Breast epithelium (tissue), 4 donors: ENCODE measurements at regions of chr17 and their contacts with region 1.

Region 1: GRCh38 chr17:63697341-63698286 is 2.3 kb downstream of the LIMD2 start:
- DNase-seq: no peak
- H3K4me3 ChIP-seq: peak overlapping the region in 2 of 3 donors; percentile 54 to 68
- H3K27ac ChIP-seq: peak overlapping the region; percentile 52
- H3K4me1 ChIP-seq: peaks cover 0 to 8% of the 10 kb centered on the region in 2 donors
- H3K27me3 ChIP-seq: no peaks in the 10 kb centered on the region
- CTCF ChIP-seq: peak in 2 of 3 donors; percentile 23 to 44
- POLR2A ChIP-seq: no peak

Region 2: DNA sequence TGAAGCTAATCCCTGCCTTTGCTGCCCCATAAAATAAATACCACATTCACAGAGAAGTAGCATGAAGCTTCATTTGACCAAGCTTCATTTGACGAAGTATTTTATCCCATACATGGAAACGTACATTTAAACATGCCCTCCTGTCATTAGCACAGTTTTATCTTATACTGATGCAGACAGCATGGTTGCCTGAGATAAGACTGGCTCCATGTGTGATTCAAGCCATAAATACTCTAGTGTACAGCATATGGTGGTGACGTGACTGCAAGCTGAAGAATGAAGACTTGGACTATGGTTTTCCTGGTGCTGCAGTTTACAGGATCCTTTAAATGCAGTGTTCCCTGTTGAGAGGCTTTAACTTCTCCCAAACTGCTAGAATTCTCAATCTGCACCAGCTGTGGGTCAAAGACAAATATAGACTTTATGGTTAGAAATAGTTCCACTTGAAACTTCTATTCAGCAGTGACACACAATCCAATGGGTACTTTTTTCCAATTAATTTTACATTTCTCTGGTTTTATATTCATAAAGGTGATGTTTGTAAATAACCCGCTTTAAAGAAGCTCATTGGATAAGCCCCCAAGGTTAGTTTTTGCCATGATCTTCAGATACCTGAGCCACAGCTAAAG is 316.4 kb before region 1 on chr17:
- intact Hi-C with region 1: loop called (anchors 5 kb)
- DNase-seq: no peak
- H3K4me3 ChIP-seq: no peak overlapping the region
- H3K27ac ChIP-seq: no peak overlapping the region
- H3K4me1 ChIP-seq: no peaks in the 10 kb centered on the region
- H3K27me3 ChIP-seq: no peaks in the 10 kb centered on the region
- CTCF ChIP-seq: no peak
- POLR2A ChIP-seq: no peak

Region 3: GRCh38 chr17:63649813-63650212 is 47.8 kb before region 1 on chr17:
- intact Hi-C with region 1: no loop called
- DNase-seq: no peak
- H3K4me3 ChIP-seq: no peak overlapping the region
- H3K27ac ChIP-seq: no peak overlapping the region
- H3K4me1 ChIP-seq: peaks cover 0 to 12% of the 10 kb centered on the region in 2 donors
- H3K27me3 ChIP-seq: no peaks in the 10 kb centered on the region
- CTCF ChIP-seq: no peak
- POLR2A ChIP-seq: no peak

Region 4: GRCh38 chr17:63681572-63681971 is 16.0 kb before region 1 on chr17:
- intact Hi-C with region 1: loop called (anchors 1 kb)
- DNase-seq: no peak
- H3K4me3 ChIP-seq: no peak overlapping the region
- H3K27ac ChIP-seq: peak overlapping the region; percentile 27 to 48
- H3K4me1 ChIP-seq: no peaks in the 10 kb centered on the region
- H3K27me3 ChIP-seq: no peaks in the 10 kb centered on the region
- CTCF ChIP-seq: no peak
- POLR2A ChIP-seq: no peak

Region 5: DNA sequence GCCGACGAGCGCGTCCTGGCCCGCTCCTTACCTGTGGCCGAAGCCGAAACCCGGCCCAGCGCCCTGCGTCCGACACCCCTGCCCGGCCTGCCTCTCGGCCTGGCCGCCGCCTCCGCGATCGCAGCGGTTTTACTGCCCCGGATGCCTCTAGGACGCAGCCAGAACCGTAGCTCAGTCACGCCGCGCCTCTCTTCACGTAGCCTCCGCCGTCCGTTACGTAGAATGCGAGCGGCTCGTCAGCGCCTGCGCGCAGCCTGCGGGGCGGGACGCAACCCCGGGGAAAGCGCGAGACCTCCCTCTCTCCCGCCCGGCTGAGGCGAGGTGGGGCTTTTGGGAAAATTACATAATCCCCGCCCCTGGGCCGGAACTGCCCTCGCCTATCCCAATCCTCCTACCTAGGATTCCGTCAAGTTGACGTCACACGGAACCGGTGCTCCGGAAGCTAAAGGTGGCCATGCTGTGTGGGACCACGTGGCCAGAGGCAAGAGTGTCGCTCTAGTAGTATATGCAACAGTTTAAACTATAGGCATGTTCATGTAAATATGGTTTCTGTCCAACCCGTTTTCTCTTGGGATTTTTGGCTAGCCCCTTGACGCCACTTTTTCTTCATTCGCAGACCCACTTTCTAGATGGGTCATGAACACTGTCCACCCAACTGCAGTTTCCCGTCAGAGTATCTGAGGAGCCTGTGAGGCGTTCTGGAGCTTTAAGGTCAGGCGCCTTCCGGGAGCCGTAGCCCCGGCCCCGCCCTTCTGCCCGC is 75.9 kb after region 1 on chr17 and contains the start of gene CCDC47:
- intact Hi-C with region 1: loop called (anchors 1 kb)
- DNase-seq: peak; percentile 98 to 99
- H3K4me3 ChIP-seq: peak within 1 kb of the TSS; percentile 73 to 99 (median 84)
- H3K27ac ChIP-seq: peak within 1 kb of the TSS; percentile 95 to 98
- H3K4me1 ChIP-seq: peaks cover 8 to 9% of the 10 kb centered on the region in 2 donors
- H3K27me3 ChIP-seq: no peaks in the 10 kb centered on the region
- CTCF ChIP-seq: no peak
- POLR2A ChIP-seq: peak; percentile 93
- total RNA-seq, gene CCDC47: 54.1 to 89.5 (median 81.7) TPM

Region 6: DNA sequence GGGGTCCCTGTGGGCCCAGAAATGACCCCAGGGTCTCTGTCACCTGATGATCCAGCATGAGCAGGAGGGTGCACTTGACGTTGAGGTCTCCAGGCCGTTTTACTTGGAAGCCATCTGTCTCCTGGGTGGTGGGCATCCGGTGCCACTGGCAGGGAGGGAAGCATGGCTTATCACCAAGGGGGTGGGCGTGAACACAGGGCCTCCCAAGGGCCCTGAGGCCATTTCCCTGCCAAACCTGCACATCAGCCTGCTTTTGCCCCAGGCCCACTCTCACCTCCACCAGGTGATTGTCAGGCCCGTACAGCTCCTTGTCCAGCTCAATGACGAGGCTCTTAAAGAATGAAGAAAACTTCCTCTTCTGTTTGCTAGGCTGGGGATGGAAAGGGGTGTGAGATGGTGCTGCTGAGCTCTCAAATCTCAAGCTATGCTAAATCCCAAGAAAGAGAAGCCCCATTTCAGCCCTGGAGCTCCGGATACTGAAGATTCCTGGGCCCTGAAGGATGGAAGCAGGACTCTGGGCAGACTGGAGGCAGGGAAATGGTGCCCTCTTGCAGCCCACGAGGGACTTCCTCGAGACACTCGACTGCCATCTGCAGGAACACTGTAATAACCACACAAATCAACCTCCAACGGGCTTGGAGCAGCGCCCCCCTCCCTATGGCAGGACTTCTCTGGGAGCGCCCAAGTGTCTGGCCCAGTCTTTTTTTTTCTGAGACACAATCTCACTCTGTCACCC is 137.0 kb after region 1 on chr17:
- intact Hi-C with region 1: loop called (anchors 5 kb)
- DNase-seq: no peak
- H3K4me3 ChIP-seq: no peak overlapping the region
- H3K27ac ChIP-seq: peak overlapping the region; percentile 45
- H3K4me1 ChIP-seq: peaks cover 11 to 24% of the 10 kb centered on the region in 2 donors
- H3K27me3 ChIP-seq: no peaks in the 10 kb centered on the region
- CTCF ChIP-seq: peak in 1 of 3 donors; percentile 25
- POLR2A ChIP-seq: no peak